Gastrocnemius medialis (tissue), 4 donors: ENCODE measurements at regions of chr3 and their contacts with region 1.

Region 1: GRCh38 chr3:111128884-111129283 is 57.3 kb downstream of the NECTIN3 start:
- DNase-seq: no peak
- ATAC-seq: no peak
- H3K4me3 ChIP-seq: no peak overlapping the region
- H3K27ac ChIP-seq: no peak overlapping the region
- H3K4me1 ChIP-seq: no peaks in the 10 kb centered on the region
- H3K27me3 ChIP-seq: no peaks in the 10 kb centered on the region
- CTCF ChIP-seq: no peak
- POLR2A ChIP-seq: no peak

Region 2: GRCh38 chr3:110711851-110712516 is 416.9 kb before region 1 on chr3:
- in situ Hi-C with region 1: loop called in 1 of 4 experiments (anchors 25 kb)
- intact Hi-C with region 1: no loop called
- DNase-seq: no peak
- ATAC-seq: no peak
- H3K4me3 ChIP-seq: no peak overlapping the region
- H3K27ac ChIP-seq: no peak overlapping the region
- H3K4me1 ChIP-seq: no peaks in the 10 kb centered on the region
- H3K27me3 ChIP-seq: no peaks in the 10 kb centered on the region
- CTCF ChIP-seq: no peak
- POLR2A ChIP-seq: no peak

Region 3: DNA sequence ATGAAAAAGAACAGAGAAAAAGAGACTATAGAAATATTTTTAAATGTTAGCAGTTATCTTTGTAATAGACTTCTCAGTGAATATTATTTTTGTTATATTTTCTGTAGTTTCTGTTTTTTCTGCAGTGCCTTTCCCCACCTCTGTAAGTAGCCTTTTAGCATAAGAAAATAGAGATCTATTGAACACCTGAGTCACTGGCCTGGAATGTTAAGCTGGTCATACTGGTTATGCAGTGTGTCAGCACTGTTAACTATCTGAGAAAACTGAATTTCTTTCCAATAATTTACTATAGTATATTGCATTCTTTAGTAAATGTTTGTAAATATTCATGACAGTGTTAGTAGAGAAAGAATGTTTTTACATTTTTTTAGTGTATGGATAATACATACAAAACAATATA is 22.6 kb after region 1 on chr3:
- in situ Hi-C with region 1: no loop called
- intact Hi-C with region 1: loop called (anchors 2 kb)
- DNase-seq: no peak
- ATAC-seq: no peak
- H3K4me3 ChIP-seq: no peak overlapping the region
- H3K27ac ChIP-seq: no peak overlapping the region
- H3K4me1 ChIP-seq: no peaks in the 10 kb centered on the region
- H3K27me3 ChIP-seq: no peaks in the 10 kb centered on the region
- CTCF ChIP-seq: no peak
- POLR2A ChIP-seq: no peak